Activated CD8-positive, alpha-beta T cell treated with anti-CD3 and anti-CD28 coated beads, Interleukin-2, amount 10 ng/mL, durations not matched to agents 7 days and 5 days (primary cell): ENCODE measurements at regions of chr4 and their contacts with region 1.

Region 1: DNA sequence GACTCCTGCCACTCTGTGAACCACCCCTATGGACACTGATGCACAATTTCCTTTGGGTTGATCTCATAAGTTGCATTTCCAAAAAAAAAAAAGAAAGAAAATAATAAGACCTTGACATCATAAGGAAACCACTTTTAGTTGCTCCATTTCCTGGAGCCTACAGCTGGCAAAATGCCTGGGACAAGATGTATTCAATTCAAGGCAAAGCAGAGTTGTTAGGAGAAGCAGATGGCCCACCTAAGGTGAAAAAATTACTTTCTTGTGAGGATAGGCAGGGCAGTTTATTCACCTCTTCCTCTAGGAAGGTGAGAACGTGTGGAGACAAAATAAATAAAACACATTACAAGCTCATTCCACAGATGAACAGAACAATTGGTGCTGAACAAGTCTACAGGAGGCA is 14.1 kb upstream of the SCRG1 start:
- DNase-seq: no peak
- ATAC-seq: no peak
- H3K4me3 Mint-ChIP-seq: no peak overlapping the region
- H3K27ac Mint-ChIP-seq: no peak overlapping the region
- H3K4me1 Mint-ChIP-seq: no peaks in the 10 kb centered on the region
- H3K27me3 Mint-ChIP-seq: peaks cover 3% of the 10 kb centered on the region

Region 2: GRCh38 chr4:173370477-173371291 is 42.4 kb before region 1 on chr4 and contains the start of gene SAP30:
- CTCF ChIA-PET with region 1: interaction called, 8 read pairs
- POLR2A ChIA-PET with region 1: interaction called, 10 read pairs
- DNase-seq: peak; percentile 98
- ATAC-seq: peak; percentile 82
- H3K4me3 Mint-ChIP-seq: peak within 1 kb of the TSS; percentile 100
- H3K27ac Mint-ChIP-seq: peak within 1 kb of the TSS; percentile 96
- H3K4me1 Mint-ChIP-seq: peaks cover 33% of the 10 kb centered on the region
- H3K27me3 Mint-ChIP-seq: no peaks in the 10 kb centered on the region
- total RNA-seq, gene SAP30: 19.7 to 21.0 TPM

Region 3: GRCh38 chr4:173635395-173635794 is 222.4 kb after region 1 on chr4:
- CTCF ChIA-PET with region 1: no interaction called
- POLR2A ChIA-PET with region 1: no interaction called
- DNase-seq: no peak
- ATAC-seq: no peak
- H3K4me3 Mint-ChIP-seq: no peak overlapping the region
- H3K27ac Mint-ChIP-seq: no peak overlapping the region
- H3K4me1 Mint-ChIP-seq: no peaks in the 10 kb centered on the region
- H3K27me3 Mint-ChIP-seq: no peaks in the 10 kb centered on the region